HepG2 (cell line): ENCODE measurements at regions of chr10 and their contacts with region 1.

Region 1: DNA sequence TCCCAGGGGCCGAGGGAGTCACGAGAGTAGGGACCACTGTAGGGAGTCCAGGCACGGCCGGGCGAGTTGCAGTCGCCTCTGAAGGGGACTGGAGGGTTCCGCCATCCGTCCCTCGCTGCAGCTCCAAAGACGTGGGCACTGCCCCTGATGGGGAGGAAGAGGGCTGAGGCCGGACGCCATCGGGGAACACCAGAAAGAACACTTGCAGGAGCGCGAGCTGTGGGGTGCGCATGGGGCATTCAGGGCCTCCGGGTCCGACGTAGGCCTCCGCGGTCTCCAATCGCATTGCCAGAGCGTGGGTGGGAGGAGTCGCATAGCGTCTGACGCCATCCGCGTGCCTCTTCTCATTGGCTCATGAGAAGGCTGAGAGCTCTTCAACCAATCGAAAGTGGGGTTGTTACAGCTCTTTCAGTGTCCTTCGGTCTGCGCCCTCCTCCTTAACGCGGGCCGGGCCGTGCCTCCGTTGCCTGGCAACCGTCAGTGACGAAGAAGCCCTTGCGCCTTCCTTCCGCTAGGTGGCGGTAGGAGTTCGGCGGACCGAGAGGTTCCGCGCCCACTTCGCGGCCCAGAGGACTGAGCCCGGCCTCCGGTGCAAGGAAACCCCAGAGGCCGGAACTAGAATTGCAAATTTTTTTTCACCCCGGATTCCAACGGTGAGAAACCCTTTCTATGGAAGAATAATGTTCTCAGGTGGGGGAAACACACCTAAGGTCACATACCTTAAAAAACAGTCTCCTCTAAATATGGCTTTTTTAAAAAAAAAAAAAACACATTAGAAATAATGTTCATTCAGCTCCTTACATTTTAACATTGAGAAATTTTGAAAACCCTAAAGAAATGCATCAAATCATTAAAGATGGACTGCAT is at the start of gene TCTN3:
- DNase-seq: peak; percentile 99
- ATAC-seq: peak; percentile 99
- H3K4me3 ChIP-seq: peak within 1 kb of the TSS; percentile 76 to 97 (median 83)
- H3K27ac ChIP-seq: peak within 1 kb of the TSS; percentile 72
- H3K4me1 ChIP-seq: peaks cover 34% of the 10 kb centered on the region
- H3K27me3 ChIP-seq: no peaks in the 10 kb centered on the region; a peak in 1 of 5 replicates
- CTCF ChIP-seq: peak; percentile 100
- EP300 ChIP-seq: peak in 1 of 2 experiments; percentile 16; a peak in 1 of 4 replicates
- POLR2A ChIP-seq: peak; percentile 83 to 89
- RAD21 ChIP-seq: peak; percentile 99
- total RNA-seq, gene TCTN3: 42.2 and 60.0 TPM in 2 replicates

Region 2: GRCh38 chr10:95423164-95424005 is 270.5 kb before region 1 on chr10:
- CTCF ChIA-PET with region 1: no interaction called
- POLR2A ChIA-PET with region 1: no interaction called
- in situ Hi-C with region 1: no loop called
- intact Hi-C with region 1: no loop called
- DNase-seq: no peak
- ATAC-seq: no peak
- H3K4me3 ChIP-seq: no peak overlapping the region
- H3K27ac ChIP-seq: no peak overlapping the region
- H3K4me1 ChIP-seq: peaks cover 9% of the 10 kb centered on the region; the same call in 1 of the 2 replicates
- H3K27me3 ChIP-seq: no peaks in the 10 kb centered on the region
- CTCF ChIP-seq: no peak
- EP300 ChIP-seq: no peak
- POLR2A ChIP-seq: no peak
- RAD21 ChIP-seq: no peak

Region 3: GRCh38 chr10:95567903-95568644 is 125.8 kb before region 1 on chr10:
- CTCF ChIA-PET with region 1: no interaction called
- POLR2A ChIA-PET with region 1: no interaction called
- in situ Hi-C with region 1: no loop called
- intact Hi-C with region 1: no loop called
- DNase-seq: no peak
- ATAC-seq: no peak
- H3K4me3 ChIP-seq: no peak overlapping the region
- H3K27ac ChIP-seq: no peak overlapping the region
- H3K4me1 ChIP-seq: peaks cover 33% of the 10 kb centered on the region
- H3K27me3 ChIP-seq: peaks cover 3 to 12% of the 10 kb centered on the region in 2 experiments; a peak in 4 of 5 replicates
- CTCF ChIP-seq: no peak
- EP300 ChIP-seq: no peak
- POLR2A ChIP-seq: no peak
- RAD21 ChIP-seq: no peak

Region 4: DNA sequence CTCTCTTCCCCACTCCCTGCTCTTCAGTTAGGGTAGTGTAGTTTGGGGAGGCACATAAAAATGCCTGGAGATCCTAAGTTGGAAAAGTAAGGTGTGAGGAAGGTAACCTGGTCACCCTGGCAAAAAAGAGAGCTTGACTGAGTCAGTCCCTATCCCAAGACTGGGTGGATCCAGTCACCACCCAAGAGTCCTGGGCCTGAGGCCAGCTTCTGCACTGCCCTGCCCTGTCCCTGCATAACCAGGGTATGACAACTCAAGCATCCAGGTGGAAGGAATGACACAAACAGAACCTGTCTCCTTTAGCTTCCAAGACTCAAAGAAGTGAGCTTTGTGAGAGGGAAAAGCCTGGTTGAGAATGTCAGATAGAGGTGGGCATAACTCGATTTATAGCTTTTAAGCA is 105.9 kb before region 1 on chr10:
- CTCF ChIA-PET with region 1: no interaction called
- POLR2A ChIA-PET with region 1: no interaction called
- in situ Hi-C with region 1: no loop called
- intact Hi-C with region 1: no loop called
- DNase-seq: no peak
- ATAC-seq: no peak
- H3K4me3 ChIP-seq: no peak overlapping the region
- H3K27ac ChIP-seq: no peak overlapping the region
- H3K4me1 ChIP-seq: no peaks in the 10 kb centered on the region
- H3K27me3 ChIP-seq: peaks cover 4% of the 10 kb centered on the region in 2 experiments; a peak in 2 of 5 replicates
- CTCF ChIP-seq: no peak
- EP300 ChIP-seq: no peak
- POLR2A ChIP-seq: no peak
- RAD21 ChIP-seq: no peak

Region 5: GRCh38 chr10:95650232-95650631 is 43.7 kb before region 1 on chr10:
- CTCF ChIA-PET with region 1: no interaction called
- POLR2A ChIA-PET with region 1: no interaction called
- in situ Hi-C with region 1: no loop called
- intact Hi-C with region 1: no loop called
- DNase-seq: no peak
- ATAC-seq: no peak
- H3K4me3 ChIP-seq: no peak overlapping the region
- H3K27ac ChIP-seq: no peak overlapping the region
- H3K4me1 ChIP-seq: peaks cover 81% of the 10 kb centered on the region
- H3K27me3 ChIP-seq: no peaks in the 10 kb centered on the region
- CTCF ChIP-seq: no peak
- EP300 ChIP-seq: no peak
- POLR2A ChIP-seq: no peak
- RAD21 ChIP-seq: no peak

Region 6: DNA sequence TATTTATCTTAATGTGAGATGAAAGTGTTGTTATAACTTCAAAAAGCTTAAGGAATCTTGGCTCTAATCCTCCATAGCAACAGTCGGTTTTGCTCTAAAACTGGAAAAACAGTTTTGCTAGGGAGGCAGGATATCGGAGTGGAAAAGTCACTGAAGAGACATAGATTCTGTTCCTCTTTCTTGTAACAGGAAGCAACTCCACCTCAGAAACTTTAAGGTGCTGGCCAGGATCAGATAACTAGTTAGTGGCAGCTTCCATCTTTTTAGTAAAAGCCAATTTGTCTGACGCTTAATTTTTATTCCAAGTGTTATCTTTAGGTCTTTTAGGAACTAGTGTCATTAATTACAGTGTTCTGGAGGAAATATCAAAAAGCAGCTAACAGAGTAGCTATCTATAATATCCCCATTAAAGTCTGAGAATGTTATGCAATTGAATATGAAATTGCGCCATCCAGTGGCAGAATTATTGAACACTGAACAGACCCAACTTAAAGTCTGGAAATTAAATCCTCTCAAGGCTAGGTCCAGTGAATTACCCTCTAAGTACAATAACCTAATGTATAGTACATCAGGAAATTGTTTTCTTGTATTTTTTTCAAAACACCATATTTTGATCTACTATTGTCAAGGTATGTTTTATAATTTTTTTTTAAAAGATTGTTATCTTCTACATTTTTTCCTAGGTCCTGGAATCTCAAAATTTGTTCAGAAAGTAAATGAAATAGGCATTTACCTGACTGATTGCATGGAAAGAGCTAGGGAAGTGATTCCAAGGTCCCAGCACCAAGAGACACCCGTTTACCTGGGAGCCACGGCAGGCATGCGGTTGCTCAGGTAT is 148.0 kb after region 1 on chr10:
- CTCF ChIA-PET with region 1: interaction called, 23 read pairs
- POLR2A ChIA-PET with region 1: interaction called, 13 read pairs
- in situ Hi-C with region 1: loop called (anchors 5 kb)
- intact Hi-C with region 1: loop called (anchors 1 kb)
- DNase-seq: peak; percentile 57
- ATAC-seq: peak; percentile 71
- H3K4me3 ChIP-seq: no peak overlapping the region
- H3K27ac ChIP-seq: no peak overlapping the region
- H3K4me1 ChIP-seq: peaks cover 25% of the 10 kb centered on the region
- H3K27me3 ChIP-seq: no peaks in the 10 kb centered on the region
- CTCF ChIP-seq: peak; percentile 74
- EP300 ChIP-seq: no peak
- POLR2A ChIP-seq: no peak
- RAD21 ChIP-seq: peak; percentile 74